Endothelial cell of umbilical vein (primary cell): ENCODE measurements at regions of chr4 and their contacts with region 1.

Region 1: DNA sequence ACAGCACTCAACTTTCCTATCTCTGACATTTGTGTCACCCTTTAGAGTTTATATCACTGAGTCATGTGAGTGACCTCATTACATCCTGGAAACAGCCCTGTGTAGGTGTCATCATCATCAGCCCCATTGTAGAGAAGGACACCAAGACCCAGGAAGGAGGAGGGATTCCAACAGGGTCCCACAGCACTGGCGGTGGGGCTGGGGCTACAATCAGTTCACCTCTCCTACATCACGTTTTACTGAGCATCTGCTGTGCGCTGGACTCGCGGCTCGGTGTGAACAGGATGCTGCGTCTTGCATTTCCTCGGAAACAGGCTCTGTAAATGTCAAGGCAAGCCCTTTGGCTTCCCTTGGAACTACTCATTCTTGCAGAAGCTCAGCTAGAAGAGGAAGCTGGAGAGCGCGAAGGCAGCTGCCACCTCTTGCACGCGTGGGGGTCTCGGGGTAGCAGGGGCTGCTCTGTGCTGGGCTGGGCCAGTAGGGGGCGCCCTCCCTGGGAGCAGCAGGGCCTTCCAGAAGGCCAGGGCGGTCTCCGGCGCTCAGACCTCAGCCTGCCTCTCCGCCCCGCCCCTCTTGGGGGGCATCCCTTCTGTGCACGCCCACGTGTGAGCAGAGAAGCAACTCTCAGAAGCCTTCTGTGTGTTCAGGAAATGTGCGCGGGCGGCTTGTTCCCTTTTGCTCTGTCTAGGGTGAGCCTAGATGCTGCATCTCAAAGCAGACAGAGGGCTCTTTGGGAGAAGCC is 29.0 kb downstream of the REELD1 start:
- DNase-seq: peak; percentile 37
- H3K4me3 ChIP-seq: no peak overlapping the region
- H3K27ac ChIP-seq: peak overlapping the region; percentile 97
- H3K4me1 ChIP-seq: peaks cover 23% of the 10 kb centered on the region
- H3K27me3 ChIP-seq: no peaks in the 10 kb centered on the region
- CTCF ChIP-seq: peak; percentile 44 to 53
- POLR2A ChIP-seq: no peak

Region 2: GRCh38 chr4:146273204-146273901 is 30.0 kb after region 1 on chr4:
- CTCF ChIA-PET with region 1: no interaction called
- POLR2A ChIA-PET with region 1: no interaction called
- dilution Hi-C with region 1: no loop called
- intact Hi-C with region 1: loop called (anchors 2 kb)
- DNase-seq: no peak
- H3K4me3 ChIP-seq: no peak overlapping the region
- H3K27ac ChIP-seq: no peak overlapping the region
- H3K4me1 ChIP-seq: no peaks in the 10 kb centered on the region
- H3K27me3 ChIP-seq: no peaks in the 10 kb centered on the region
- CTCF ChIP-seq: no peak
- POLR2A ChIP-seq: no peak

Region 3: GRCh38 chr4:146291313-146291712 is 48.0 kb after region 1 on chr4:
- CTCF ChIA-PET with region 1: no interaction called
- POLR2A ChIA-PET with region 1: no interaction called
- dilution Hi-C with region 1: no loop called
- intact Hi-C with region 1: loop called (anchors 1 kb)
- DNase-seq: no peak
- H3K4me3 ChIP-seq: no peak overlapping the region
- H3K27ac ChIP-seq: no peak overlapping the region
- H3K4me1 ChIP-seq: no peaks in the 10 kb centered on the region
- H3K27me3 ChIP-seq: no peaks in the 10 kb centered on the region
- CTCF ChIP-seq: no peak
- POLR2A ChIP-seq: no peak

Region 4: DNA sequence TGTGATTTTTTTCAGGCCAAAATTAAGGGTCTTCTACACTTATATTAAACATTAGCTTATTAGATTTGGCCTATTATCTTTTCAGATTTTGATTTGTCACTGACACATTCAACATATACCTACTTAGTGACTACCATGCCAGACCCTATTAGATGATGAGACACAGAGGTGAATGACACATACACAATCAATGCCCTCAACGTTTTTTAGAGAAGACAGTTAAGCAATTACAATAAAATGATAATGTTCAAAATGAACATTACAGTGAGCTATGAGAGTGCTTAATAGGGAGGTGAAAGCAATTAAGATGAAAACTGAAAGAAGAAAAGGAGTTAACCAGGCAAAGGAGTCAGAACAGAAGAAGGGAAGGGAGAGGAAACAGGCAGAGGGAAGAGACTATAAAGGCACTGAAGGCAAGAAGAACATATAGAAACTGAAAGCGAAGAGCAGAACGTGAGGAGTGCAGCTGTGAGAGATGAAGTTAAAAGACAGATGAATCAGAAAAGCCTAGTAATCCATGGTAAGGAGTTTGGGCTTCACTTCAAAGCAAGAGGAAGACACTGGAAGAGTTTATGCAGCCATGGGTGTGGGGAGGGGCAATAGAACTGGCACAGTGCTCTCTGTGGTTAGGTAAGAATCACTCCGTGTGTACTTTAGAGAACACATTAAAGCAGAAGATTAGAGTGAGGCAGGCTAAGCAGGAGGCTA is 90.0 kb after region 1 on chr4:
- CTCF ChIA-PET with region 1: interaction called, 6 read pairs
- POLR2A ChIA-PET with region 1: no interaction called
- dilution Hi-C with region 1: no loop called
- intact Hi-C with region 1: loop called (anchors 1 kb)
- DNase-seq: no peak
- H3K4me3 ChIP-seq: no peak overlapping the region
- H3K27ac ChIP-seq: no peak overlapping the region
- H3K4me1 ChIP-seq: peaks cover 49% of the 10 kb centered on the region
- H3K27me3 ChIP-seq: no peaks in the 10 kb centered on the region
- CTCF ChIP-seq: no peak
- POLR2A ChIP-seq: no peak

Region 5: DNA sequence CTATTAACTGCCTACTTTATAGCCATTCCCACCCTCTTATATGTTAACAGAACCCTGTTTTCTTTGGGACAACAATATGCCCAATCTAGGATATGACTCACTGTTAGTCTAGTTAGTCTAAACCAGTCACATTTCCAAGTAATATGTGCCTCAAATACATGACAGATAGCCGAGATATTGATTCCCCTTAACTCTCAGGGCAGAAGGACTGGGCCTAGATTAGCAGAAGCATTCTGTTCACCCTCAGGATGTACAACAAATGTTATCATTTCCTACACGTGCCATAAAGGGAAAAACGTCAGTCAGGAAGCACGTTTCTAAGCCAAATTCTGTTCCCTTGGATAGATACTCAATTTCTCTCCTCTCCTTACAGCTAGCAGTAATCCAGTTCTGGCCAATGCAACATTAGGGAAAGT is 164.4 kb after region 1 on chr4:
- CTCF ChIA-PET with region 1: no interaction called
- POLR2A ChIA-PET with region 1: no interaction called
- dilution Hi-C with region 1: no loop called
- intact Hi-C with region 1: loop called (anchors 1 kb)
- DNase-seq: peak; percentile 99
- H3K4me3 ChIP-seq: peak overlapping the region in 1 of 3 experiments; percentile 29
- H3K27ac ChIP-seq: peak overlapping the region; percentile 97
- H3K4me1 ChIP-seq: peaks cover 26% of the 10 kb centered on the region
- H3K27me3 ChIP-seq: no peaks in the 10 kb centered on the region
- CTCF ChIP-seq: no peak
- POLR2A ChIP-seq: peak; percentile 52

Region 6: DNA sequence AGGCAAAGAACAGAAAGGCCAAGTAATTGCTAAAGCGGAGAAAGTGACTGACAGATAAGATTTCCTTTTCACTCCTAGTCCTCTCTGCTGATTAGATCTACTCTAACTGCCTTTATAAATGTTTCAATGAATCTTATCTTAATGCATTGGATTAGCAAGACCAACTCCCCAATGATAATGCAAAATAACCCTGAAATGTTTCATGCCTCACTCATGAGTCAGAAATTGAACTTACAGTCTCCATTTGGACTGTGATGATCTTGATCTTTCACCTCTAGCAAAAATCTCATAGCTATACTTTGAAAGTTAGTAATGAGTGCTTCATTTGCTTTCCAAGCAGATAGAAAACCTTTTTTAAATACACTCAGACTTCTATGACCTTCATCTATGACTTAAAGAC is 252.0 kb after region 1 on chr4:
- CTCF ChIA-PET with region 1: no interaction called
- POLR2A ChIA-PET with region 1: no interaction called
- dilution Hi-C with region 1: no loop called
- intact Hi-C with region 1: no loop called
- DNase-seq: no peak
- H3K4me3 ChIP-seq: no peak overlapping the region
- H3K27ac ChIP-seq: no peak overlapping the region
- H3K4me1 ChIP-seq: no peaks in the 10 kb centered on the region
- H3K27me3 ChIP-seq: no peaks in the 10 kb centered on the region
- CTCF ChIP-seq: no peak
- POLR2A ChIP-seq: no peak

Region 7: DNA sequence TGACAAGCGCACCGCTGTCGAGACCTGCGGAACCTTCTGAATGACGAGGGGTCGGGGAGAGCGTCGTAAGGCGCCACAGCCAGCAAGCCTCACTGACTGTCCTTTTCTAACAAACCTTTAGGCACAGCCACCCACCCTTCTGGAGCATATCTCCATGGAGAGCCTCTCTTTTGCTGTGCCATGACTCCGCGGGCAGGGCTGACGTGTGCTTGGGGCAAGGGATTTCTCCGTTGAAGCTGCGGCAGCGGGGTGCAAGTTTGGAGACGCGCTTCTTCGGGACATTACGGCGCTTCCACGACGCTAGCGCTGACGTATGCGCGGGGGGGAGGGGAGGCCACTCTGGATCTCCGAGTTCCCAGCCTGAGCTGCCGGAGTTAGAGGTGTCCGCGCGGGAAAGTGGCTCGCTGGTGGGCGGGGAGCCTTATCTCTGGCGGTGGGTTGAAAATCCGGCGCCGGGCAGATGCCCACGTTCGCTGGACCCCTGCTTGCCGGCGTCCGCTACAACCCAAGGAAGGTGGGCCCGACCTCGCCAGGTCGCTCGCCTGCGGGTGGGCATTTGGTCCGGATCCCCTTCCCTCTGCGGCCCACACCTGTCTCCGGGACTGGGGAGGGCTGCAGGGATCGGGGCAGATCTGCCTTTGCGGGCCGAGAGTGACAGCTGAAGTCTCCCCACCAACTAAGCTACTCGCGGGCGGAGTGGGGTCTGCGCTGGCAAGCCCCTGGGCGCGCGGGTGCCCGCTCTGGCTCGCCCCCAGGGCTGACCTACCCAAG is 279.0 kb after region 1 on chr4:
- CTCF ChIA-PET with region 1: no interaction called
- POLR2A ChIA-PET with region 1: no interaction called
- dilution Hi-C with region 1: no loop called
- intact Hi-C with region 1: loop called (anchors 1 kb)
- DNase-seq: peak; percentile 85
- H3K4me3 ChIP-seq: peak overlapping the region; percentile 84 to 99 (median 90)
- H3K27ac ChIP-seq: peak overlapping the region; percentile 73
- H3K4me1 ChIP-seq: peaks cover 17% of the 10 kb centered on the region
- H3K27me3 ChIP-seq: no peaks in the 10 kb centered on the region
- CTCF ChIP-seq: no peak
- POLR2A ChIP-seq: peak; percentile 38